ENCODE measurements at regions of chr7 and their contacts with region 1.

Region 1: DNA sequence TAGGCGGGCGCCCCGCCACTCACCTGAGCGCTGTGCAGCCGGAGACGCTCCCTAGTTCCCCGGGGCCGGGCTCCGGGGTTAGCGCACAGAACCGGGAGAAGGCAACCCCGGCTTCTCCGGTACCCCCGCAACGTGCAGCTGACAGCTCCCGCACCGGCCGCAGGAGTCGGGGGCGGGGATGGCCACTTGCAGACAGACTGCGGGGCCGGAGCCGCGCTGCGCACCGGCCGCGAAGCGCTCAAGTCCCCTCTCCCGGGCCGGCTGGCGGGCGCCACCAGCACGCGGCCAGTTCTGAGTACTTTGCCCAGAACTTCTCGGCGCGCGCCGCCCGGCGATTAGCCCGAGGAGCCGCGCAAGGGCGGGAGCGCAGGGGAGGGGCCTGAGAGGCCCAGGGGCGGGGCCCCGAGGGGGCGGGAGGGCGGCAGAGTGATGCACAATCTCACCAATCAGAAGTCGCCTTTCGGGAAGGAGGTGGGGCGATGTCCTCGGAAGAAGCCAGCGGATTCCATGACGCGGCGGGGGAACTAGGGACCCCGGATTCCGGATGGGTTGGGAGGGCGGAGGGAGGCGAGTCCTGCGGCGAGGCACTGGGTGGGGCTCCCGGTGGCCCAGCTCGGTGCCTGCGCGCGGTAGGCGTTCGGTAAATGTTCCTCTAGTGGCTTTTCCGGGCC is at the start of gene OSBPL3:
- DNase-seq: peak; percentile 97
- H3K4me3 Mint-ChIP-seq: peak within 1 kb of the TSS; percentile 93
- H3K27ac Mint-ChIP-seq: peak within 1 kb of the TSS; percentile 92
- H3K4me1 Mint-ChIP-seq: peaks cover 51% of the 10 kb centered on the region
- H3K27me3 Mint-ChIP-seq: no peaks in the 10 kb centered on the region
- total RNA-seq, gene OSBPL3: 41.2 to 45.1 TPM

Region 2: GRCh38 chr7:23531794-23532489 is 1448.1 kb before region 1 on chr7 and contains the start of gene TRA2A:
- CTCF ChIA-PET with region 1: no interaction called
- POLR2A ChIA-PET with region 1: no interaction called
- intact Hi-C with region 1: loop called (anchors 2 kb)
- DNase-seq: peak; percentile 98
- H3K4me3 Mint-ChIP-seq: peak within 1 kb of the TSS; percentile 100
- H3K27ac Mint-ChIP-seq: peak within 1 kb of the TSS; percentile 100
- H3K4me1 Mint-ChIP-seq: peaks cover 38% of the 10 kb centered on the region
- H3K27me3 Mint-ChIP-seq: no peaks in the 10 kb centered on the region
- total RNA-seq, gene TRA2A: 75.4 to 77.8 TPM

Region 3: GRCh38 chr7:24819916-24820689 is 159.9 kb before region 1 on chr7:
- CTCF ChIA-PET with region 1: interaction called, 86 read pairs
- POLR2A ChIA-PET with region 1: interaction called, 41 read pairs
- intact Hi-C with region 1: loop called (anchors 1 kb)
- DNase-seq: peak; percentile 84
- H3K4me3 Mint-ChIP-seq: peak overlapping the region; percentile 62
- H3K27ac Mint-ChIP-seq: peak overlapping the region; percentile 95
- H3K4me1 Mint-ChIP-seq: peaks cover 33% of the 10 kb centered on the region
- H3K27me3 Mint-ChIP-seq: no peaks in the 10 kb centered on the region

Region 4: GRCh38 chr7:24877790-24878311 is 102.1 kb before region 1 on chr7:
- CTCF ChIA-PET with region 1: interaction called, 22 read pairs
- POLR2A ChIA-PET with region 1: interaction called, 28 read pairs
- intact Hi-C with region 1: no loop called
- DNase-seq: peak; percentile 46
- H3K4me3 Mint-ChIP-seq: peak overlapping the region; percentile 38
- H3K27ac Mint-ChIP-seq: peak overlapping the region; percentile 61
- H3K4me1 Mint-ChIP-seq: peaks cover 55% of the 10 kb centered on the region
- H3K27me3 Mint-ChIP-seq: no peaks in the 10 kb centered on the region

Region 5: GRCh38 chr7:24922099-24922773 is 57.8 kb before region 1 on chr7:
- CTCF ChIA-PET with region 1: interaction called, 7 read pairs
- POLR2A ChIA-PET with region 1: interaction called, 11 read pairs
- intact Hi-C with region 1: loop called (anchors 1 kb)
- DNase-seq: no peak
- H3K4me3 Mint-ChIP-seq: no peak overlapping the region
- H3K27ac Mint-ChIP-seq: peak overlapping the region; percentile 85
- H3K4me1 Mint-ChIP-seq: peaks cover 86% of the 10 kb centered on the region
- H3K27me3 Mint-ChIP-seq: no peaks in the 10 kb centered on the region

Region 6: GRCh38 chr7:25028370-25029021 is 48.5 kb after region 1 on chr7:
- CTCF ChIA-PET with region 1: interaction called, 14 read pairs
- POLR2A ChIA-PET with region 1: interaction called, 6 read pairs
- intact Hi-C with region 1: loop called (anchors 1 kb)
- DNase-seq: peak; percentile 42
- H3K4me3 Mint-ChIP-seq: peak overlapping the region; percentile 0
- H3K27ac Mint-ChIP-seq: peak overlapping the region; percentile 70
- H3K4me1 Mint-ChIP-seq: peaks cover 48% of the 10 kb centered on the region
- H3K27me3 Mint-ChIP-seq: no peaks in the 10 kb centered on the region

Region 7: GRCh38 chr7:25098096-25099046 is 118.4 kb after region 1 on chr7:
- CTCF ChIA-PET with region 1: interaction called, 44 read pairs
- POLR2A ChIA-PET with region 1: no interaction called
- intact Hi-C with region 1: loop called (anchors 1 kb)
- DNase-seq: peak; percentile 69
- H3K4me3 Mint-ChIP-seq: no peak overlapping the region
- H3K27ac Mint-ChIP-seq: no peak overlapping the region
- H3K4me1 Mint-ChIP-seq: peaks cover 11% of the 10 kb centered on the region
- H3K27me3 Mint-ChIP-seq: peaks cover 2% of the 10 kb centered on the region